ENCODE measurements at regions of chr4 and their contacts with region 1.

Region 1: GRCh38 chr4:128809477-128810330 is at the start of gene JADE1:
- DNase-seq: peak; percentile 77
- H3K4me3 ChIP-seq: peak within 1 kb of the TSS; percentile 77
- CTCF ChIP-seq: peak; percentile 81

Region 2: DNA sequence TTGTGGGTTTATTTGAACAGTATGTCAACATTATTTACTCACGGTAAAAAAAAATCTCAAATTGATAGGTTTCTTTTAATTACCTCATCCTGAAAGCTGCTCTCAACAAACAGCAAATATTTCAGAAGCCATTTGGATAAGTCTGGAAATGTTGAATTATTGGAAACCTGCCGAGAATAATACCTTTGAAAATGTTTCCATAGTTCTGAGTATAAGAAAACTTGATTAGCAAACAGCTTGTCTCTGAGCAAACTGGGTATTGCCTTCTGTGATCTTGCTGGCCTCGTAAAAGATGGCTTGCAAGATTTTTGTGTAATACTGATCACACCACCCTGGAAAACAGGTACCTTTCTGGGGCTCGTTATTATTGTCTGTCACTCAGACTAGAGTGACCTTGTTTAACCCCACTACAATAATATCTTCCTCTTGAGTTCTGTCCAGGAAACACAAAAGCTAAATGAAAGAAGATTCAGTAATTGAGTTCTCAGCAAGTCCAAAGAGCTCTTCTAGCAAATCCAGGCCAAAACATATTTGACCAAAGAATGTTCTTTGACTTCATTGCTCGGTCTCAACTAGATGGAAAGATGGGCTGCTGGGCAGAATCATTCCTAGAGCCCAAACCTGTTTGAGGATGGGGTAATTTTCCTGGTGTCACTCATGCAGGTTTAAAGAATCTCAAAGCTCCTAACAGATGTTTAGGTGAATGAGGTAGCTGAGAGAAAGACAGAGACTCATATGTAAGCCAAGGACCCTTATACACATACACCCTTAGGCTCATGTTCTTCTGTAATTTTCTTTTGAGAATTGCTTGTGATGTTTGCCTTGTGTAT is 255.8 kb before region 1 on chr4:
- CTCF ChIA-PET with region 1: interaction called, 6 read pairs
- POLR2A ChIA-PET with region 1: interaction called, 10 read pairs
- DNase-seq: no peak
- H3K4me3 ChIP-seq: peak overlapping the region; percentile 65; the same call in 1 of the 2 replicates
- CTCF ChIP-seq: no peak

Region 3: GRCh38 chr4:128574706-128575105 is 235.0 kb before region 1 on chr4:
- CTCF ChIA-PET with region 1: interaction called, 15 read pairs
- POLR2A ChIA-PET with region 1: interaction called, 4 read pairs
- DNase-seq: peak; percentile 34
- H3K4me3 ChIP-seq: no peak overlapping the region
- CTCF ChIP-seq: peak; percentile 42

Region 4: GRCh38 chr4:128823025-128823661 is 13.4 kb after region 1 on chr4:
- CTCF ChIA-PET with region 1: interaction called, 3 read pairs
- POLR2A ChIA-PET with region 1: interaction called, 26 read pairs
- DNase-seq: peak; percentile 95
- H3K4me3 ChIP-seq: no peak overlapping the region
- CTCF ChIP-seq: no peak

Measured in AG04449 (cell line).